Astrocyte of the cerebellum (primary cell): ENCODE measurements at regions of chr9 and their contacts with region 1.

Region 1: GRCh38 chr9:115883457-115884329 is 269.9 kb upstream of the PAPPA start:
- DNase-seq: peak; percentile 29
- H3K4me3 ChIP-seq: no peak overlapping the region
- CTCF ChIP-seq: peak; percentile 70

Region 2: GRCh38 chr9:115832031-115832430 is 51.7 kb before region 1 on chr9:
- in situ Hi-C with region 1: loop called (anchors 5 kb)
- DNase-seq: no peak
- H3K4me3 ChIP-seq: no peak overlapping the region
- CTCF ChIP-seq: no peak